ENCODE measurements at regions of chr11 and their contacts with region 1.

Region 1: DNA sequence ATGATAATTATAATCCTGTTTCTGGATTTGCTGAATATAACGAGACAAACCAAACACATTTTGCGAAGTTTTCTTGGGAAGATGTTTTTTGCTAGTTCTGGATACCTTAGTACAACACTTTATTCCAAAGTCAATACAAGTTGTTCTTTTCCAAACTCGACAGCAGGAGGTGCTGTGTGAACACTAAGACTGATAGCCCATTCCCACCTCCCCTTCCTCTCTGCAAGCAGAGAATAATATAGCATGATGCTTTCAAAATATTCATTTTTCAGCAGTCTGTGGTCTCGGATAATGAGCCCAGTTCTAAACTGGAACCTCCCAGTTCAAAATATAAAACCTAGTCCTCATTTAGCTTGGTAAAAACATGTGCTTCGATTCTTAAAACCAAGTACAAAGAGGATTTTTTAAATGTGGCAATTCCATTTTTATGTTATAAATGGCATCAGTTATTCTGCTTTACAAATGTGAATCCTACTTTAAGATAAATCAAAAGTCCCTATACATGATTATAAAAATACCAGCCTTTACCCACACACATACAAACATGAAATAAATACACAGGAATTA is 129.1 kb downstream of the DCDC1 start:
- ATAC-seq: peak; percentile 45 to 73 (median 61)
- H3K4me3 ChIP-seq: no peak overlapping the region
- H3K27ac ChIP-seq: no peak overlapping the region
- H3K4me1 ChIP-seq: peaks cover 6 to 39% of the 10 kb centered on the region in 2 donors

Region 2: DNA sequence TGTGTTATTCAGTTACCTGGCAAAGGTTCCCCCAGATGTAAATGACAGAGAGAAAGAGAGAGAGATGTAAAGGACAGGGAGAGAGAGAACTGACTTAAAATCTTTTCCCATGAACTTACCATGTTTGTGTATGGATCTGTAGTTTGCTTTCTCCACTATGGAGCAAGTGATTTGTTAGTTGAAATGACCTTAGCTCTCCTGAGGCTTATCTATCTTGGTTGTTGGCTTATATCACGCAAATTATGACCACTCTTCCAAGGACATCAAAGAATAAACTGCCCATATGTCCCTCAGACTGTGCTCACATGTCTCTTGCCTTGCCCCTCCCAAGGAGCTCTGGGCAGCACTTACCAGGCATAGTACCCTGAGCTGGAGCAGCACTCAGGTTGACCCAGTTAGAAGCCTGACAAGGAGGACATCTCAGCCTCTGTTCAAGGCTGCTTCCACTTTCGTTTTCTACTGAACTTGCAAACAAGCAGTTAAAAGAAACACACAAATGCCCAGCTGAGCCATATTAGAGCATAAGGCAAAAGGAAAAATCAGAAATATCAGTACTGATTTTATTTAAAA is 755.2 kb after region 1 on chr11:
- in situ Hi-C with region 1: loop called in 1 of 9 experiments (anchors 25 kb)
- ATAC-seq: peak in 7 of 8 experiments; percentile 45 to 87 (median 64)
- H3K4me3 ChIP-seq: no peak overlapping the region
- H3K27ac ChIP-seq: no peak overlapping the region
- H3K4me1 ChIP-seq: peaks cover 0 to 15% of the 10 kb centered on the region in 2 donors